PC-3 (cell line): ENCODE measurements at regions of chr6 and their contacts with region 1.

Region 1: GRCh38 chr6:142946181-142946923 is 1.4 kb upstream of the HIVEP2 start:
- DNase-seq: peak; percentile 96
- ATAC-seq: peak; percentile 54
- H3K4me3 ChIP-seq: peak overlapping the region; percentile 94
- H3K27ac ChIP-seq: peak overlapping the region; percentile 92
- H3K4me1 ChIP-seq: peaks cover 23% of the 10 kb centered on the region
- H3K27me3 ChIP-seq: no peaks in the 10 kb centered on the region
- CTCF ChIP-seq: no peak

Region 2: GRCh38 chr6:142474531-142475289 is 471.6 kb before region 1 on chr6:
- CTCF ChIA-PET with region 1: interaction called, 16 read pairs
- POLR2A ChIA-PET with region 1: no interaction called
- intact Hi-C with region 1: loop called (anchors 10 kb)
- DNase-seq: peak; percentile 78
- ATAC-seq: peak; percentile 97
- H3K4me3 ChIP-seq: peak overlapping the region; percentile 48; the same call in 1 of the 2 replicates
- H3K27ac ChIP-seq: 0 out of 2 replicates have a peak overlapping the region, but pooled peaks have one; percentile 2
- H3K4me1 ChIP-seq: no peaks in the 10 kb centered on the region
- H3K27me3 ChIP-seq: no peaks in the 10 kb centered on the region
- CTCF ChIP-seq: peak; percentile 78

Region 3: GRCh38 chr6:142838821-142839685 is 107.3 kb before region 1 on chr6:
- CTCF ChIA-PET with region 1: no interaction called
- POLR2A ChIA-PET with region 1: interaction called, 5 read pairs
- intact Hi-C with region 1: loop called (anchors 1 kb)
- DNase-seq: peak; percentile 85
- ATAC-seq: peak; percentile 81
- H3K4me3 ChIP-seq: peak overlapping the region; percentile 12; the same call in 1 of the 2 replicates
- H3K27ac ChIP-seq: peak overlapping the region; percentile 86
- H3K4me1 ChIP-seq: peaks cover 45% of the 10 kb centered on the region
- H3K27me3 ChIP-seq: no peaks in the 10 kb centered on the region
- CTCF ChIP-seq: no peak

Region 4: DNA sequence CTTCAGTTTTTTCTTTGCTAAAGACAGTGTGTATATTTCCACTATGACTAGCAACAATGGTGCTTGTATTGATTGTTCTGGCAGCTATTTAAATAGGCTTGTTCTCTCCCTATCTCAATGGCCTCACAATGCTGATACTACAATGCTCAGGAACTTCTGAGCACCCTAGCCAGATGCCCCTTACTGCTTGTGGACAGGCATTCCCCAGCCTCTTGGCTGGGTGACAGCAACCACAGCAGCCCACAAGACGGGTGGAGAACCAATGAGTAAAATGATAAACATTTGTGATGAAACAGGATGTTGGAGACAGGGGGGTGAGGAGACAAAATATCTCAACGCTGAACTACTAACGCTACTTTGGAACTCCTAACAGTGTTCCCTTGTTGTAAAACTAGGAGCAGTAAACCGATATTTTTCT is 43.7 kb before region 1 on chr6:
- CTCF ChIA-PET with region 1: no interaction called
- POLR2A ChIA-PET with region 1: no interaction called
- intact Hi-C with region 1: loop called (anchors 5 kb)
- DNase-seq: peak; percentile 92
- ATAC-seq: peak; percentile 92
- H3K4me3 ChIP-seq: peak overlapping the region; percentile 58; the same call in 1 of the 2 replicates
- H3K27ac ChIP-seq: peak overlapping the region; percentile 92
- H3K4me1 ChIP-seq: peaks cover 33% of the 10 kb centered on the region
- H3K27me3 ChIP-seq: no peaks in the 10 kb centered on the region
- CTCF ChIP-seq: no peak

Region 5: GRCh38 chr6:143136647-143137046 is 190.3 kb after region 1 on chr6:
- CTCF ChIA-PET with region 1: no interaction called
- POLR2A ChIA-PET with region 1: no interaction called
- intact Hi-C with region 1: loop called (anchors 5 kb)
- DNase-seq: no peak
- ATAC-seq: no peak
- H3K4me3 ChIP-seq: no peak overlapping the region
- H3K27ac ChIP-seq: no peak overlapping the region
- H3K4me1 ChIP-seq: no peaks in the 10 kb centered on the region
- H3K27me3 ChIP-seq: no peaks in the 10 kb centered on the region
- CTCF ChIP-seq: no peak

Region 6: DNA sequence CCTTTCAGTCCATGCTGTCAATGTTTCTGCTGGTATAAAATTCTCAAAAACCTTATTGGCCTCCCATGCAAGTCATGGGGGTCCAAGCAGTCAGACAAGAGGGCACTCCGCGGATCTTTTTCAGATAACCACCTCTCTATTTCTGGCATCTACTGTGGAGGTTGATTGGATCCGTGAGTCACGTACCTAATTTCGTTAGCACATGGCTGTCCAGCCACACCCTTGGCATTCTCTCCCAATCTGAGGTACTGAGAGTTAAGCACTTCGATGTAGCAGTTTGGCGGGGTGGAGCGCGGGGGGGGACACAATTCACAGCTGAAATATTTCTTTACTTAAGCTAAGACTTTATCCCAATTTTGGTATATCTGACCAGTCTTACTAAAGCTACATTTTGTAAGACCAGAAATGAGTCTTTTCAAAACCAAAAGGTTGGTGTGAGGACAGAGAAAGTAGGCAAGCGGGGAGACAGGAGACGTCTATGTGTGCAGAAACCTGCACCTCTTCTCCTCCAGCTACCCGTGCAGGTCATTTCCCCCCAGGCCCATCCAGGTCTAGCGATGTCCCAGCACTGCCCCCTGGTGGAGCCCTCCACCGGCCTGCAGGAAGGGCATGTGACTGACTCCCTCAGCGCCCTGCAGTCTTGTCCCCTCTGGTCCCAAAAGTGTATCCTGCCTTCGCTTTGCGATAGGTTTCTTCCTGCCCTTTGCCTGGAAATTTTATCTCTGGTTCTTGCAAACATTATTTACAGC is 391.0 kb after region 1 on chr6:
- CTCF ChIA-PET with region 1: no interaction called
- POLR2A ChIA-PET with region 1: interaction called, 7 read pairs
- intact Hi-C with region 1: loop called (anchors 2 kb)
- DNase-seq: peak; percentile 37
- ATAC-seq: no peak
- H3K4me3 ChIP-seq: no peak overlapping the region
- H3K27ac ChIP-seq: peak overlapping the region; percentile 100
- H3K4me1 ChIP-seq: peaks cover 61% of the 10 kb centered on the region
- H3K27me3 ChIP-seq: no peaks in the 10 kb centered on the region
- CTCF ChIP-seq: peak; percentile 62